AG04449 (cell line): ENCODE measurements at regions of chr12 and their contacts with region 1.

Region 1: DNA sequence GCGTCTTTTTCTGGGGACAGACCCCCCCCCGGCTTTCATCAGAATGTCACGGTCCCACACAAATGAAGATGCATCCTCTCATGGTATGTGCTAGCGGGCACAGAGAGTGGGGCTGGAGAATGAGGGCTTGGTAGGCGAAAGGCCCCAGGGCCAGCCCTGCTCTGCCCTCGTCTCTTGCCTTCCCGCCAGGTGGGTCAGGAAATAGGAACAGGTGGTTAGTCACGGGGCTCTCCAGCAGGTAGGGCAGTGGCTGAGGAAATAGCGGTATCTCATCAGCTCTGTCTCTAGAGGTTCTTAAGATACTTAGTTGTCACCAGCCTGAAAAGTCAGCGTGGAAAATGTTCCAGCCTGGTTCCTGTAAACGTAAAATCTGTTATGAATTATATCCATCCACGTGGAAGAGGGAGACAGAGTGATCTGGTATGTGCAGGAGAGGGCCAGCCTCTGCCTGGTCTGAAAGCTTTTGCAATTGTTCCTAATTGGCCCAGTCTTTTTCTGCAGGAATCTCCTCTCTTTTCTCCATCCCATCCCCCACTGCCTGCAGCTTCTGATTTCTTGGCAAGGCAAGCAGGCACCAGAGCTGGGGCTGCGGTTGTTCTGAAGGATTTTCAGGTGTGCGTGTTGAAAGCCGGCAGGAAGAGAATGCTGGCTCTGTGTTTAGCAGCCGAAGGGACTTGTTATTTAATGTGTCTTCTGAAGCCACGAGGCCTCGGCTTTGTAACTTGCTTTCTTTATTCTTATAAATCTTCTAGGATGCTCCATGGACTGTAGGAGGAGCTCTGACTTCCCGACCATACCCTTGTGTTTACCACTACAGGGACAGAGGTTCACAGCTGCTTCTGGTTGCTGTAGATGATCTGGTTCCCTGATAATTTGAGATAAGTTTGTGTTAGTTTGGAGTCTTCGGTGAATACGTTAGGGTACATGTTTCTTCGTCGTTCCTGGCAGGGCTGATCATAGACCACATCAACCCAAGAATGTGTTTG is 131.1 kb downstream of the CACNA1C start:
- DNase-seq: peak; percentile 47
- H3K4me3 ChIP-seq: peak overlapping the region; percentile 9; the same call in 1 of the 2 replicates
- CTCF ChIP-seq: peak; percentile 34

Region 2: GRCh38 chr12:2194060-2194459 is 10.2 kb after region 1 on chr12:
- CTCF ChIA-PET with region 1: interaction called, 13 read pairs
- POLR2A ChIA-PET with region 1: interaction called, 3 read pairs
- DNase-seq: no peak
- H3K4me3 ChIP-seq: no peak overlapping the region
- CTCF ChIP-seq: no peak

Region 3: DNA sequence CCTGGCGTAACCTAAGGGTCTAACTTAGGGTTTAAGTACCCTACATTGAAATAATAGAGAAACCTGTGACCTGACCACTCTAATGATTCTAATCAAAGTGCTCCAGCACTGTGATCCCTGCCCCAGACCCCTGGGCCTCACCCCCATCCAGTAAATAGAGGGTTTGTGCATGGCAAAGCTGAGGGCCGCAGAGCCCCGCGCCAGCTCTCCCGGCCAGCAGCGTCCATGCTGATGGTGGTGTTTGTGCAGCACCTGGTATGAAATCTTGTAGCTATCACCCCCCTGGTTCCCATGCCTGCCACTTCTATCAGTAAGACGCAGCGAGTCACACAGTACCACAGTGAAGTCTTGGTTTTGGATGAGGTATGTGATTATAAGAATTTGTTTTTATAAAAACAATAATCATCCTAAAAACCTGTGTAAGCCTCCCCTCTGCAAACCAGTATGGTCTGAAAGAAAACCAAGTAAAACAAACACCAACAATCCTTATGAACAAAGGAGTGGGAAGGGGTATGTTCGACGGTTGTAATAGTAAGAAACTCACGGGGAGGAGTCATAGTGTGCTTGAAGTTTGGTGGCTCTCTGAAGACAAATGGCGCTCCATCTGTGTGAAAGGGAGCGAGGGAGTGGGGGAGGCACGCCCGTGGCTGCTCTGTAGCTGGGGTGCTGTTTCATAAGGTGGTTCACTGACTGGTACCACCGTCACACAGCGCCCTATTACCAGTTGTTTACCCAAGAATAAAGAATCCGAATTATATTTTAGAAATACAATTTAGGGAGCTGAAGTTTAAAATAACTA is 25.2 kb after region 1 on chr12:
- CTCF ChIA-PET with region 1: no interaction called
- POLR2A ChIA-PET with region 1: no interaction called
- DNase-seq: no peak
- H3K4me3 ChIP-seq: no peak overlapping the region
- CTCF ChIP-seq: no peak